Activated CD8-positive, alpha-beta T cell treated with anti-CD3 and anti-CD28 coated beads, Interleukin-2, amount 10 ng/mL, durations not matched to agents 7 days and 5 days (primary cell): ENCODE measurements at regions of chr13 and their contacts with region 1.

Region 1: GRCh38 chr13:23899555-23899954 is 2.3 kb upstream of the C1QTNF9B start:
- DNase-seq: peak; percentile 30
- ATAC-seq: no peak
- H3K4me3 Mint-ChIP-seq: no peak overlapping the region
- H3K27ac Mint-ChIP-seq: no peak overlapping the region
- H3K4me1 Mint-ChIP-seq: peaks cover 14% of the 10 kb centered on the region
- H3K27me3 Mint-ChIP-seq: peaks cover 31% of the 10 kb centered on the region

Region 2: GRCh38 chr13:23466144-23467002 is 433.2 kb before region 1 on chr13:
- CTCF ChIA-PET with region 1: interaction called, 16 read pairs
- POLR2A ChIA-PET with region 1: no interaction called
- DNase-seq: peak; percentile 74
- ATAC-seq: peak; percentile 95
- H3K4me3 Mint-ChIP-seq: peak overlapping the region; percentile 58
- H3K27ac Mint-ChIP-seq: no peak overlapping the region
- H3K4me1 Mint-ChIP-seq: peaks cover 8% of the 10 kb centered on the region
- H3K27me3 Mint-ChIP-seq: peaks cover 13% of the 10 kb centered on the region

Region 3: DNA sequence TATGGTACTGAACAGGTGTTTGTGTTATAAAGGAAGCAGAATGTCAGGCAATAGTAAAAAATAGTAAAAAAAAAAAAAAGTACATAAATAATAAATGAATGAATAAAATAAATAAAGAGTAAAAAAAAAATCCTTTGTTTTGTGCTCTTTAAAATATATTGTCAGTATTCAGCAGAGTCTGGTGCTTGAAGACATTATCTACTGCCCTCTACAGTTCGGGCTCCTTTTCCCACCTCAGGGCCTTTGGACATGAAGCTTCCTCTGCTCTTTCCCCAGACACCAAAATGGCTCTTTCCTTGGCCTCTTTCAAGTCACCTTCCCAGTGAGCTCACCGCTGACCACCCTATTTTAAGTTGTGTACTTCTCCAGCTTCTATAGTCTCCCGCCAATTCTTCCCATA is 191.9 kb before region 1 on chr13:
- CTCF ChIA-PET with region 1: no interaction called
- POLR2A ChIA-PET with region 1: no interaction called
- DNase-seq: no peak
- ATAC-seq: no peak
- H3K4me3 Mint-ChIP-seq: no peak overlapping the region
- H3K27ac Mint-ChIP-seq: no peak overlapping the region
- H3K4me1 Mint-ChIP-seq: no peaks in the 10 kb centered on the region
- H3K27me3 Mint-ChIP-seq: peaks cover 6% of the 10 kb centered on the region

Region 4: DNA sequence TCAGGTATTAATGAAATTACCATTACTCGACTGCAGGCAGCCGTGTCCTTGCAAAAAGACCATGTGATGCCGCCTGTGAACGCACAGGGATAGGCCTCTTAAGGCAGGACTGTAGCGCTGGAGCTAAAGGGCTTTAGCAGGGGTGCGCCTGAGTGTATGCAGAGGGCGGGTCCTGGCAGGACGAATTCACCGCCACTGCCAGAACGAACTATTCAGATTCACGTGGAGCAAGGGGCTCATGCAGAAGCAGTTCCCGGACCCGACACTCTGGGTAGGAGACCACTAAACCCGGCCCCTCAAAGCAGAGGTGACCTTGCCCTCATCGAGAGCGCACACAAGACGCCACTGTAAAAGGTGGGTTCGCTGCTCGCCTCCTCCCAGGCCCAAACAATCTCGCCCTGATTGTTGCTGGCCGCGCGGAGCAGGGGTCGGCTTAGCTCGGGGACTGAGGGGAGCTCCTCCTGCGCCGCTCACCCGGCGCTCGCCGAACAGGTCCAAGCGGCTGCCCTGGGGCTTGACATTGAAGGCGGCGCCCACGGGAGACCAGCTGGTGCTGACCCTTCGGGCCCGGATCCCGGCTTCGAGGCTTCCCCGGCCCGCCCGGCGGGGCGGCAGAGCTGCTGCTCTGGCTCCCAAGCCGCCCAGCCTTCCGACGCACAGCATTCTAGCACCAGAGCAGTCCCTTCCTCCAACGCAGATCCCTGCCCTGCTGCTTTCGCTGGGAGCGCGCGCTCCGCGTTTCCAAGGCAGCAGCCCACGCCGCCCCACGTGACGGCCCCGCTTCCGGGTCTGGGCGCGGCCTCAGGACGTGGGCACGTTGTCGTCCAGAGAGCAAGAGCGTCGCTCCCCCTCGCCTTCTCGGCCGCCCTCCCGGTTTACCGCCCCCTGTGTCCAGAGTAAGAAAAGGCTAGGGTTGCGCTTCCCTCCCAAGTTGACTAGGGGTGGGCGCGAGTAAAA is 10.6 kb before region 1 on chr13 and contains the start of gene MIPEP:
- CTCF ChIA-PET with region 1: interaction called, 11 read pairs
- POLR2A ChIA-PET with region 1: interaction called, 3 read pairs
- DNase-seq: peak; percentile 91
- ATAC-seq: peak; percentile 97
- H3K4me3 Mint-ChIP-seq: peak within 1 kb of the TSS; percentile 80
- H3K27ac Mint-ChIP-seq: peak within 1 kb of the TSS; percentile 83
- H3K4me1 Mint-ChIP-seq: peaks cover 20% of the 10 kb centered on the region
- H3K27me3 Mint-ChIP-seq: no peaks in the 10 kb centered on the region
- total RNA-seq, gene MIPEP: 9.6 to 11.6 TPM

Region 5: GRCh38 chr13:23945612-23946011 is 46.1 kb after region 1 on chr13:
- CTCF ChIA-PET with region 1: no interaction called
- POLR2A ChIA-PET with region 1: no interaction called
- DNase-seq: no peak
- ATAC-seq: no peak
- H3K4me3 Mint-ChIP-seq: no peak overlapping the region
- H3K27ac Mint-ChIP-seq: no peak overlapping the region
- H3K4me1 Mint-ChIP-seq: no peaks in the 10 kb centered on the region
- H3K27me3 Mint-ChIP-seq: peaks cover 2% of the 10 kb centered on the region